RWPE1 (cell line): ENCODE measurements at regions of chr20 and their contacts with region 1.

Region 1: DNA sequence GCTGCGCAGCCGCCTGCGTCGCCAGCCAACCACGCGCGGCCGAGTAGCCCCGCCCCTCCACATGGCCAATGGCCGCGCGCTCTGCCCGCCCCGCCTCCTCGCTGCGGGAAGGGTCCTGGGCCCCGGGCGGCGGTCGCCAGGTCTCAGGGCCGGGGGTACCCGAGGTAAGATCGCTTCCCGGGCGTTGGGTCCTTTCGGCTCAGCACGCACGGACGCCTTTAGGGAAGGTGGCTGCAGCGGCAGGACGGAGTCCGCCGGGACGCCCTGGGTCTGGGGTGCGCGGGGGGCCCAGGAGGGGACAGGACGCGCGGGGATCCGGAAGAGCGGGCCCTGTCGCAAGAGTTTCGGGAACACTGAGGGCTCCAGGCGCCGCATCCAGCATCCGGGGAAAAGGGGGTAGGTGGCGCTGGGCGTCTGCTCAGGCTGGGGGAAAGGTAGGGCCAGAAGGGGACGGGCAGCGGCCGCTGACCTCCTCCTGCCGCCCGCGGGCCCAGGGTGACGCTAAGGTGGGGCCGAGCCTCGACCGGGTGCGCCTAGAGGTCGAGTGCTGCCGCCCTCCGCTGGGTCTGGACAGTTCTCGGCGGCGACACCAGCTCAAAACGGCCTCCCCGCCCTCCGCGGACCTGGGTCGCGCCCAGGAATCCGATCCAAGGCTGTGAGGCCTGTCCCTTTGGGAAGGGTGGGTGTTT is at the start of gene MAVS:
- DNase-seq: peak; percentile 89
- H3K27ac ChIP-seq: peak within 1 kb of the TSS; percentile 87
- CTCF ChIP-seq: no peak; the same call in 1 of the 2 replicates

Region 2: DNA sequence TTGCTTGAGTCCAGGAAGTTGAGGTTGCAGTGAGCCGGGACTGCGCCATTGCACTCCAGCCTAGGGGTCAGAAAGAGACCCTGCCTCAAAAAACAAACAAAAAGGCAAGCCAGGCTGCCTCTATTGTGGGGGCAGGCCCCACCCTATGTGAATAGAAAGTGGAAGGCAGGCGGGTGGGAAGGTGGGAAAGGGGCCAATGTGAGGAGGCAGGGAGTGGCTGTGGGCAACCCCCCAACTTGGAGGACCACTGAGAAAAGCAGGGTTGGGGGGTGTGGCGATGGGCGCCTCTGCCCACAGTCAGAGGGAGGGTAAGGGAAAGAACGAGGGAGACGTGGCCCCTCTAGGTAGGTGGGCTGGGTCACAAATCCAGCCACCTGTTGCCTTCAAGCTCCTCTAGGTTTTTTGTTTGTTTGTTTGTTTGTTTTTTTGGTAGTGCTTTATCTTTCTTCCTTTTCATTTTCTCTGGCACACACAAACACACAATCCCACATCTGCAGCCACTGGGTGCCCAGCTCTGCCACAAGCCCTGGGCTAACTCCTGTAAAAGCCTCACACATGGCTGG is 31.9 kb before region 1 on chr20:
- CTCF ChIA-PET with region 1: interaction called, 3 read pairs
- POLR2A ChIA-PET with region 1: interaction called, 11 read pairs
- DNase-seq: no peak
- H3K27ac ChIP-seq: peak overlapping the region; percentile 28
- CTCF ChIP-seq: no peak

Region 3: GRCh38 chr20:4026093-4026601 is 179.3 kb after region 1 on chr20:
- CTCF ChIA-PET with region 1: no interaction called
- POLR2A ChIA-PET with region 1: no interaction called
- DNase-seq: peak; percentile 73
- H3K27ac ChIP-seq: peak overlapping the region; percentile 76
- CTCF ChIP-seq: no peak

Region 4: DNA sequence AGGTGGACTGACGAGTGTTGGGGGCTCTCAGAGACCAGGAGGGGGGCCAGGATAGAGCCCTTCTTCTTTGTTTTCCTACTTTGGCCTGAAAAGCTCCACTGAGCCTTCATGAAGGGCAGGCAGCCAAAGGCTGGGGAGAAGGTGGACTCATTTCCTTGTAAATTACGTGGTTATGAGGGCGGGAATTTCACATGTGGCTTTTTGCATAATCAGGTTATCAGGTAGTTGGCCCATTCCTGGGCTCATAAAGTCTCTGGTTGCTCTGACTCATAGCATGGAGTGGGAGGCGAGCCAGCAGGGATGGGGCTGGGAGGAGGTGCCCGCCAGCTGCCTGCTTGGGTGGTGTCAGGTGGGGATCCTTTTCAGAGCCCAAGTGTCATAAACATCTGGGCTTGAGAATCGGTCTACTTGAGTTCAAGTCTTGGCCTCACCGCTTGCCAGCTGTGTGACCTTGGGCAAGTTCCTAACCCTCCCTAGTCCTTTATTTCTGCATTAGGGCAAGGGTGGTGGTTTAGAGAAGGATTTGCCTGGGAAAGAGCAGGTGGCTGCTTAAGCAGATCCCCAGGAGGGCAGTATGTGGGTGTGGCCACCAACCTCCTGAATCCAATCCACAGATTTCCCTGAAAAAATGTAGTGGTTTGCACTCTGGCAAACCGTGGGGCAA is 195.0 kb after region 1 on chr20:
- CTCF ChIA-PET with region 1: no interaction called
- POLR2A ChIA-PET with region 1: no interaction called
- DNase-seq: peak; percentile 98
- H3K27ac ChIP-seq: peak overlapping the region; percentile 90
- CTCF ChIP-seq: no peak